ENCODE measurements at regions of chr9 and their contacts with region 1.

Region 1: GRCh38 chr9:85425153-85425611 is 316.6 kb downstream of the AGTPBP1 start:
- DNase-seq: peak in 4 of 5 donors; percentile 34 to 54 (median 42)
- ATAC-seq: peak in 2 of 4 donors; percentile 42 to 51
- H3K4me3 ChIP-seq: no peak overlapping the region
- H3K27ac ChIP-seq: no peak overlapping the region
- H3K4me1 ChIP-seq: peaks cover 0 to 3% (median 0%) of the 10 kb centered on the region in 12 donors
- H3K27me3 ChIP-seq: peaks cover 0 to 10% (median 0%) of the 10 kb centered on the region in 9 donors
- CTCF ChIP-seq: peak; percentile 33 to 70 (median 54)
- POLR2A ChIP-seq: no peak

Region 2: GRCh38 chr9:85332487-85332886 is 92.7 kb before region 1 on chr9:
- intact Hi-C with region 1: loop called in 1 of 10 experiments (anchors 10 kb)
- DNase-seq: no peak
- ATAC-seq: no peak
- H3K4me3 ChIP-seq: no peak overlapping the region
- H3K27ac ChIP-seq: no peak overlapping the region
- H3K4me1 ChIP-seq: no peaks in the 10 kb centered on the region
- H3K27me3 ChIP-seq: no peaks in the 10 kb centered on the region
- CTCF ChIP-seq: peak in 3 of 12 donors; percentile 5 to 16 (median 9)
- POLR2A ChIP-seq: no peak

Region 3: GRCh38 chr9:85359161-85359560 is 66.0 kb before region 1 on chr9:
- intact Hi-C with region 1: no loop called
- DNase-seq: no peak
- ATAC-seq: no peak
- H3K4me3 ChIP-seq: no peak overlapping the region
- H3K27ac ChIP-seq: no peak overlapping the region
- H3K4me1 ChIP-seq: no peaks in the 10 kb centered on the region
- H3K27me3 ChIP-seq: no peaks in the 10 kb centered on the region
- CTCF ChIP-seq: no peak
- POLR2A ChIP-seq: no peak

Region 4: DNA sequence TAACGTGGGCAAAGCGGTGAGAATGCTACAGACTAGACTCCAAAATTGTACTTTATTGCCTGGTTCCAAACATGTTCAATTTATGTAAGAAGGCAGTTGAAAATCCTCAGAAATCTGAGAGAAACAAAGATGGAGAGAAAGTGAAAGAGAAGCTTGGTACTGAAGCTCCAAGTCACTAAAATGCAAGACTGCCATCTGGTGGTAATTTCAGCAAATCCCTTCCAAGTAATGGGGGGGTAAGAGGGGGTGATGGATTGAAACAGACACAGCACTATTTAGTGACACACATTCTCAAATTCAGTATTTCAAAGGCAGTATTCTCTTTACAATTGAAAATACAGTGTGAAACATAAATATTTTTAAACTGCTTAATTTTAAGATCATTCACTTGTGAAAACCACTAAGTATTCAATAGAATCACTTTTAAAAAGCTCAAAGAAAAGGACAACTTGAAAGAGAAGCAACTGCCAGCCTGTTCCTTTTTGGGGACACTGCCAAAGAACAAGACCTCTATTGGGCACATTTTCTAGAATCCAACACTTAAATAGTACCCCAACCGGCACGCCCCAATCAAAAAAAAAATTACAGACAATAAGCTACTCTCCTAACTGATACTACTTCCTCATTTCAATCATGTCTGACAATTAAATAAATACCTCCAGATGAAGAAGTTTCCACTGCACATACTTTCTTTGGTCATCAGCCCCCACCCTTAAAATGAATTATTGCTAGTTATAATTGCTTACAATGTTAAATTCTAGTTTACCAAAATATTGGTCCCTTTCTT is 185.1 kb after region 1 on chr9:
- intact Hi-C with region 1: loop called in 2 of 10 experiments (anchors 10 kb)
- DNase-seq: no peak
- ATAC-seq: peak in 3 of 4 donors; percentile 64 to 78 (median 73)
- H3K4me3 ChIP-seq: peak overlapping the region in 7 of 12 donors; percentile 5 to 46 (median 31)
- H3K27ac ChIP-seq: peak overlapping the region in 1 of 12 donors; percentile 18
- H3K4me1 ChIP-seq: peaks cover 0 to 7% (median 0%) of the 10 kb centered on the region in 12 donors
- H3K27me3 ChIP-seq: no peaks in the 10 kb centered on the region
- CTCF ChIP-seq: peak; percentile 69 to 90 (median 76)
- POLR2A ChIP-seq: no peak